OCI-LY7 (cell line): ENCODE measurements at regions of chr7 and their contacts with region 1.

Region 1: DNA sequence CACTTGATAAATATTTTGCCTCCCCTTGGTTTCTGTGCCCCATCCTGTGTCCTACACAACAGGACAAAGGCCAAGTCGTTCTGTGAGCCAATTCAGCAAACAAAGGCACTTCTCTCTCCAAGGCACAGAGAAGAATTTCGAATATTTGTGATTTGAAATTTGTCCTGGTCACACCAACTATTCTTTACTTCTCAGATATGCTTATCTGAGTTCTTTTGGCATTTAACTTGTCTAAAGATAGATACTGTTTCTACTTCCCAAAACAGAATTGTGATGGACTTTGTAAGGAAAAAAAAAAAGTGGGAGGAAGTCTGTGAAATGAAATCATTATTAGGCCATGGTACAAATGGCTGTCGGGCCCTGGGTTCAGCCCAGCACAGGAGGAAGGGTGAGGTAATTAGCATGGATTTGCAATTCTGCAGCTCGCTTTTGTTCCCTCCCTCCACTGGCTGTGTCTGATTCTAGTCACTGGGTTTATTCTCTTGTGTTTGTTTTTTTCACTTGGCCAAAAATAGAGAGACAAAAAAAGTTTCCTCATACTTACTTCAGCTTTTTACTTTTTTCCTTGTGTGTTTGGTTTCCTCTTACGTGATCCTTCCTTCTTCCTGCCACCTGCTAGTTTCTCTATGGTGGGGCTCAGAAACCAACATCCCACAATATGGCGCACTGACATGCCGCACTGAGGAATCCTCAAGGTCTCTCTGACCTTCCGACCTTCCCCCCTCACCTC is 108.2 kb upstream of the MKLN1 start:
- DNase-seq: peak; percentile 61
- H3K4me3 ChIP-seq: peak overlapping the region; percentile 28
- H3K27ac ChIP-seq: peak overlapping the region; percentile 79
- H3K4me1 ChIP-seq: peaks cover 30% of the 10 kb centered on the region
- CTCF ChIP-seq: no peak

Region 2: GRCh38 chr7:131231381-131232220 is 12.1 kb after region 1 on chr7:
- CTCF ChIA-PET with region 1: interaction called, 5 read pairs
- POLR2A ChIA-PET with region 1: interaction called, 11 read pairs
- intact Hi-C with region 1: no loop called
- DNase-seq: peak; percentile 72
- H3K4me3 ChIP-seq: peak overlapping the region; percentile 37
- H3K27ac ChIP-seq: peak overlapping the region; percentile 73
- H3K4me1 ChIP-seq: peaks cover 28% of the 10 kb centered on the region
- CTCF ChIP-seq: no peak

Region 3: DNA sequence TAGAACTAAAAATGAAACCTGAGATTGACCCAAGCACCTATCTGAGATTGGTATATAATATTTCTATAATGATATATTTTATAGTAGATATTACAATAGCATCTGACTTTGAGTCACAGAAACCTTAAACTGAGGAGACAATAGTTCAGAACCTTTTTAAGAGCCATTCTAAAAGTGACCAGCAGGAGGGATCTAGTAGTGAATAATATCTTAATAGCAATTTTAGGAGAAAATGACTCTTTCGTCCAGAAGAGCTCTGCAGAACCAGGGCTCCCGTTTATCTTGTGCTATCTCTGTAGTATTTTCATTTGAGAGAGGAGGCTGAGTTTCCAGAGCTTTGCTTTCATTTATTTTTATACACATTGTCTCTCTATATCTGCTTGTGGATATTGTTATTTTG is 268.9 kb after region 1 on chr7:
- CTCF ChIA-PET with region 1: no interaction called
- POLR2A ChIA-PET with region 1: no interaction called
- intact Hi-C with region 1: no loop called
- DNase-seq: no peak
- H3K4me3 ChIP-seq: no peak overlapping the region
- H3K27ac ChIP-seq: no peak overlapping the region
- H3K4me1 ChIP-seq: no peaks in the 10 kb centered on the region
- CTCF ChIP-seq: peak; percentile 39; the same call in 1 of the 2 replicates